MCF 10A (cell line): ENCODE measurements at regions of chr6 and their contacts with region 1.

Region 1: DNA sequence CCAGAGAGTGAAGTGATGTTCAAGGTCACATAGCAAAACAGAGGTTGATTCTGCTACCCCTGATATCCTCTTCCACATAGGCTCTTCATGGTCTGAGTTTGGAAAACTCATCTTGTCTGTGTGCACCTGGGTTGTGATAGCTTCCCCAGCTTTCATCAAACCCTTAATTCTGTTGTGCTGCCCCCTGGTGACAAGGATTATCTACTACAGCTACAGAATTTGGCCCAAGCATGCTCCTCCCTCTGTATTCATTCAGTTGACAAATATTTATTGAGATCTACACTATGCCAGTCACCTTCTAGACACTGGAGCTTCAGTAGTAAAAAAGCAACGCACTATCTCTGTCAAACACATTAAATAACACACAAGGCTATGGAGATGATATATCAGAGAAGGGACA is 50.4 kb downstream of the SMPDL3A start:
- DNase-seq: peak; percentile 79
- H3K4me3 Mint-ChIP-seq: no peak overlapping the region
- H3K27ac Mint-ChIP-seq: no peak overlapping the region
- H3K4me1 Mint-ChIP-seq: peaks cover 7% of the 10 kb centered on the region
- H3K27me3 Mint-ChIP-seq: no peaks in the 10 kb centered on the region
- CTCF ChIP-seq: peak; percentile 54

Region 2: DNA sequence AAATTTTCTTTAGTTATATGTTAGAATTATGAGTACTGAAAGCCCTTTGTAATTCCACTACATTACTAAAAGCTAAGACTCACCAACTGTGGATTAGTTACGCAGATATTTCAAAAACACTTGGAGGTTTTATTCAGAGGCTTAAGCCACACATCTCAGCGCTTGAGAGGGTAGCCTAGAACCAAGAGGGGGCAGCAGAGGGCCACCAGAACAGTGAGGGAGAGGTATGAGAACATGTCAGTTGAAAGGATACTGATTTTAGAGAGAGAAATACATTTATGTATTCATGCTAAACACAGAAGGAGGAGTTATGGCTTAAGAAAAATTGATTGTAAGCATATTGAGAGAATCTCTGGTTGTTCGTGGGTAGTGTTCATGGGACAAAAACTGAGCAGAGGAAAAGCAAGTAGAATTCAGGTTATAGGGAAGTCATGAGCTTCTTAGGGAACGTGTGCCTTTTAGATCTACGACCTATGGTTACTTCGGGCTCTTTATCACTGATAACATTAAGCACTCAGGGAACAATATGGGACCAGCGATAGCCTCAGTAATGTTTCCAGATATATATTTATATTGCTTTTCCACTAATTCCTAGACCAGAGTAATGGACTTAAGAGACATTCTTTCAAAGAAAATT is 347.4 kb before region 1 on chr6:
- CTCF ChIA-PET with region 1: interaction called, 17 read pairs
- POLR2A ChIA-PET with region 1: no interaction called
- intact Hi-C with region 1: loop called (anchors 1 kb)
- DNase-seq: peak; percentile 80
- H3K4me3 Mint-ChIP-seq: no peak overlapping the region
- H3K27ac Mint-ChIP-seq: peak overlapping the region; percentile 2
- H3K4me1 Mint-ChIP-seq: peaks cover 6% of the 10 kb centered on the region
- H3K27me3 Mint-ChIP-seq: no peaks in the 10 kb centered on the region
- CTCF ChIP-seq: peak; percentile 77

Region 3: GRCh38 chr6:122730775-122731386 is 108.6 kb before region 1 on chr6:
- CTCF ChIA-PET with region 1: interaction called, 238 read pairs
- POLR2A ChIA-PET with region 1: interaction called, 14 read pairs
- intact Hi-C with region 1: loop called (anchors 1 kb)
- DNase-seq: peak; percentile 63
- H3K4me3 Mint-ChIP-seq: no peak overlapping the region
- H3K27ac Mint-ChIP-seq: no peak overlapping the region
- H3K4me1 Mint-ChIP-seq: peaks cover 11% of the 10 kb centered on the region
- H3K27me3 Mint-ChIP-seq: no peaks in the 10 kb centered on the region
- CTCF ChIP-seq: peak; percentile 67

Region 4: GRCh38 chr6:122751326-122751725 is 88.2 kb before region 1 on chr6:
- CTCF ChIA-PET with region 1: interaction called, 136 read pairs
- POLR2A ChIA-PET with region 1: no interaction called
- intact Hi-C with region 1: no loop called
- DNase-seq: no peak
- H3K4me3 Mint-ChIP-seq: no peak overlapping the region
- H3K27ac Mint-ChIP-seq: no peak overlapping the region
- H3K4me1 Mint-ChIP-seq: no peaks in the 10 kb centered on the region
- H3K27me3 Mint-ChIP-seq: no peaks in the 10 kb centered on the region
- CTCF ChIP-seq: no peak

Region 5: DNA sequence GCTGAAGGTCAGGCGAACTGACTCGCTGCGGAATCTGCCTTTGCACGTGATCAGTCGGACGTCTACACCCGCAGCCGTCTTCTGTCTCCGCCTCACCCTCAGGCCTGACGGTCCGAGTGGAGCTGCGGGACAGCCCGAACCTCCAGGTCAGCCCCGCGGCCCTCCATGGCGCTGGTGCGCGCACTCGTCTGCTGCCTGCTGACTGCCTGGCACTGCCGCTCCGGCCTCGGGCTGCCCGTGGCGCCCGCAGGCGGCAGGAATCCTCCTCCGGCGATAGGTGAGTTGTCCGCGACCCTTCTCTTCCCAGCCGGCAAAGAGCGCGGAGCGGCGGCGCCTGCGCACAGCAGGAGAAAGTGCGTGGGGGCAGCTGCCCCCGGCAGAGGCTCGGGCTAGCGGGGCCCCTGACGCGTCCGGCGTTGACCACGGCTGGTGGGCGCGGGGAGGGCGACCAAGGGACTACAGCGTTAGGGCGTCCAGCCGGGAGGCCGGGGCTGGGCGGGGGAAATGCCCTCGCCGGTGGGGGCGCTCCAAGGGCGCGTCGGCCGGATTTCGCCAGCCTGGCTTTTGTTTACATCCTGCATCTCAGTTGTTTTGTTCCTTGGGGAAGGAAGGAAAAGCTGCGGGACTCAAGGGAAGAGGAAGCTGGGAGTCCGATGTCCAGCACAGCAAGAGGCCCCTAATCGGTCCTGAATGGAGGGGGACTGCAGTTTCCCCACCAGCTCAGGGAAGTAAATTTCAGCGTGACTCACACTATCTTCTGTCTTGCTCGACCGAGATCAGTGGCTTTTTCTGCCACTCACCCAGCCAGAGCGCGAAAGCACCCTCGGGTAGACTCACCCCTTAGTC is 50.1 kb before region 1 on chr6 and contains the start of gene SMPDL3A:
- CTCF ChIA-PET with region 1: interaction called, 26 read pairs
- POLR2A ChIA-PET with region 1: interaction called, 23 read pairs
- intact Hi-C with region 1: loop called (anchors 1 kb)
- DNase-seq: peak; percentile 66
- H3K4me3 Mint-ChIP-seq: peak within 1 kb of the TSS; percentile 87
- H3K27ac Mint-ChIP-seq: peak within 1 kb of the TSS; percentile 80
- H3K4me1 Mint-ChIP-seq: peaks cover 15% of the 10 kb centered on the region
- H3K27me3 Mint-ChIP-seq: no peaks in the 10 kb centered on the region
- CTCF ChIP-seq: peak; percentile 35
- total RNA-seq, gene SMPDL3A: 3.5 and 4.7 TPM in 2 replicates

Region 6: GRCh38 chr6:122825158-122825557 is 14.3 kb before region 1 on chr6:
- CTCF ChIA-PET with region 1: interaction called, 14 read pairs
- POLR2A ChIA-PET with region 1: no interaction called
- intact Hi-C with region 1: no loop called
- DNase-seq: no peak
- H3K4me3 Mint-ChIP-seq: no peak overlapping the region
- H3K27ac Mint-ChIP-seq: no peak overlapping the region
- H3K4me1 Mint-ChIP-seq: no peaks in the 10 kb centered on the region
- H3K27me3 Mint-ChIP-seq: no peaks in the 10 kb centered on the region
- CTCF ChIP-seq: no peak